Heart left ventricle (tissue), 16 donors: ENCODE measurements at regions of chr20 and their contacts with region 1.

Region 1: DNA sequence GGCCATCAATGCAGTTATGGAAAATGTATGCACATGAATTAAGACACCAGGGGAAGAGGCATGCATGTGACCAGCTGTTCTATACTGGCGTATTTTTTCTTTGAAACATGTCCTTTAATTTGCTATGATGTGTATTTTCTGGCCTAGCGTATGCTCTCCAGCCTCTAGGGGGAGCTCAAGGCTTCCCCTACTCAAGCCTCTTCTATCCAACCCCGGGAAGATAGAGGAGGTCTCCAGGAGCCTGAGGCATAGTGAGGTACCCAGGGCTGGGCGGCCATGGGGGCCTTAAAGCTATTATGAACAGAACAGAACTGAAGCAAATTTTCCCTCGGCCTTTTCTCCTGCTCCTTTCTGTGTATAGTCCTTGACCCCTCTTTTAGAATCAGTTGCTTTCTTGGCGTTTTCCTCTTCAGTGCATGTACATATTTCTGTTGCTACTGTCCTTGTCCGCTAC is 528.9 kb downstream of the MAFB start:
- DNase-seq: peak in 4 of 5 donors; percentile 17 to 41 (median 30)
- ATAC-seq: peak; percentile 51 to 76 (median 66)
- H3K4me3 ChIP-seq: no peak overlapping the region
- H3K27ac ChIP-seq: no peak overlapping the region
- H3K4me1 ChIP-seq: no peaks in the 10 kb centered on the region
- H3K27me3 ChIP-seq: peaks cover 0 to 3% (median 0%) of the 10 kb centered on the region in 9 donors
- CTCF ChIP-seq: peak; percentile 52 to 75 (median 68)
- POLR2A ChIP-seq: no peak

Region 2: GRCh38 chr20:40233406-40233805 is 73.3 kb after region 1 on chr20:
- intact Hi-C with region 1: loop called in 1 of 10 experiments (anchors 10 kb)
- DNase-seq: no peak
- ATAC-seq: no peak
- H3K4me3 ChIP-seq: no peak overlapping the region
- H3K27ac ChIP-seq: no peak overlapping the region
- H3K4me1 ChIP-seq: peaks cover 0 to 3% (median 0%) of the 10 kb centered on the region in 12 donors
- H3K27me3 ChIP-seq: peaks cover 0 to 16% (median 0%) of the 10 kb centered on the region in 9 donors
- CTCF ChIP-seq: no peak
- POLR2A ChIP-seq: no peak

Region 3: GRCh38 chr20:40956542-40957264 is 796.6 kb after region 1 on chr20:
- intact Hi-C with region 1: loop called in 3 of 10 experiments (anchors 5 to 10 kb)
- DNase-seq: no peak
- ATAC-seq: peak in 1 of 4 donors; percentile 47
- H3K4me3 ChIP-seq: no peak overlapping the region
- H3K27ac ChIP-seq: no peak overlapping the region
- H3K4me1 ChIP-seq: peaks cover 0 to 7% (median 0%) of the 10 kb centered on the region in 12 donors
- H3K27me3 ChIP-seq: peaks cover 0 to 4% (median 0%) of the 10 kb centered on the region in 9 donors
- CTCF ChIP-seq: no peak
- POLR2A ChIP-seq: no peak